ENCODE measurements at regions of chr7 and their contacts with region 1.

Region 1: DNA sequence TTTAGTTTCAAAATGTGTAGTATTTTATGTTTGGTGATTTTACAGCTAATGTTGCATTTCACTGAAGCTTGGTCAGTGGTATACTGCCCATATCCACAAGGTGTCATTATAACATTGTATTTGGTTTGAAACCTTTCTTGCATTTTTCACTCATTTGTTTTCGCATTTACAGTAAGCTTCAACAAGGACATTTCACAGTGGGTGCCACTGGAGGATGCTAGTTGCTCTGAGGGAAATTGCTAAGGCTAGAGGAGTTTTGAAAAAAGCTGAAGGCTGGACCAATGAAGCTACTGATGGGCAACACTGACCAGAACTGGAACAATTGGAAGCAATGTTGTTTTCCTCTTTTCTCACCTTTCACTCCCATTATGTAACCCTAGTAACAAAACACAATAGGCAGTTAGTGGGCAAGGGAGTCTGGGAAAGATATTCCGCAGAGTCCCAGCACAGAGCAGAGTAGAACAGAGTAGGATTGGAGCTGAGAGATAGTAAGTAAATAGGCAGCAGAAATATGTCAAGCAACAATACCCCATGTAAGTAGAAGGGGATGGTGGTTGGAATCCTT is 23.6 kb upstream of the SRI start:
- DNase-seq: peak; percentile 57
- H3K4me3 Mint-ChIP-seq: no peak overlapping the region
- H3K27ac Mint-ChIP-seq: no peak overlapping the region
- H3K4me1 Mint-ChIP-seq: no peaks in the 10 kb centered on the region
- H3K27me3 Mint-ChIP-seq: no peaks in the 10 kb centered on the region
- CTCF ChIP-seq: peak; percentile 73

Region 2: GRCh38 chr7:88226886-88227516 is 16.4 kb before region 1 on chr7:
- CTCF ChIA-PET with region 1: interaction called, 10 read pairs
- POLR2A ChIA-PET with region 1: no interaction called
- intact Hi-C with region 1: no loop called
- DNase-seq: peak; percentile 92
- H3K4me3 Mint-ChIP-seq: no peak overlapping the region
- H3K27ac Mint-ChIP-seq: peak overlapping the region; percentile 76
- H3K4me1 Mint-ChIP-seq: no peaks in the 10 kb centered on the region
- H3K27me3 Mint-ChIP-seq: no peaks in the 10 kb centered on the region
- CTCF ChIP-seq: no peak

Region 3: DNA sequence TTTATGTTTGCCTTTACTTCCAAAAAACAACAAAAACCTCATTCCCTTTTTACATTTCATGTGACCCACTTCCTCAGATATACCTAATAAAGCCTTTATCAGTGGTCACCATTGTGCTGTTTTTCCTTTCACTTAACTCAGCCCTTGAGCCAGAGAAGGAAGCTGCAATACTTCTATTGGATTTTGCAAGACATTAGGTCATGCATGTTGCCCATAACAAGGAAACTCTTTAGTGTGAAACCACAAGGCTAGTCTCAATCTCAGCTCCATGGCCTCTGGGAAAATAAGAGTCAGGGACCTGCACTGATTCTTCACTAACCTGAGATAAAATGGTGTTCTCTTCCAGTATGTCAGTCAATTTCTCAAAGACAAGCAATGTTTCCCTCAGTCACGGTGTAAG is 35.5 kb after region 1 on chr7:
- CTCF ChIA-PET with region 1: interaction called, 12 read pairs
- POLR2A ChIA-PET with region 1: no interaction called
- intact Hi-C with region 1: no loop called
- DNase-seq: peak; percentile 45
- H3K4me3 Mint-ChIP-seq: no peak overlapping the region
- H3K27ac Mint-ChIP-seq: no peak overlapping the region
- H3K4me1 Mint-ChIP-seq: peaks cover 8% of the 10 kb centered on the region
- H3K27me3 Mint-ChIP-seq: no peaks in the 10 kb centered on the region
- CTCF ChIP-seq: no peak

Region 4: GRCh38 chr7:88357781-88358525 is 114.5 kb after region 1 on chr7:
- CTCF ChIA-PET with region 1: interaction called, 229 read pairs
- POLR2A ChIA-PET with region 1: interaction called, 5 read pairs
- intact Hi-C with region 1: loop called (anchors 1 kb)
- DNase-seq: peak; percentile 42
- H3K4me3 Mint-ChIP-seq: peak overlapping the region; percentile 52
- H3K27ac Mint-ChIP-seq: no peak overlapping the region
- H3K4me1 Mint-ChIP-seq: no peaks in the 10 kb centered on the region
- H3K27me3 Mint-ChIP-seq: no peaks in the 10 kb centered on the region
- CTCF ChIP-seq: peak; percentile 60

Region 5: GRCh38 chr7:88835147-88835728 is 591.8 kb after region 1 on chr7:
- CTCF ChIA-PET with region 1: no interaction called
- POLR2A ChIA-PET with region 1: no interaction called
- intact Hi-C with region 1: loop called (anchors 2 kb)
- DNase-seq: peak; percentile 51
- H3K4me3 Mint-ChIP-seq: no peak overlapping the region
- H3K27ac Mint-ChIP-seq: no peak overlapping the region
- H3K4me1 Mint-ChIP-seq: no peaks in the 10 kb centered on the region
- H3K27me3 Mint-ChIP-seq: peaks cover 27% of the 10 kb centered on the region
- CTCF ChIP-seq: peak; percentile 36